K562 (cell line): ENCODE measurements at regions of chr21 and their contacts with region 1.

Region 1: DNA sequence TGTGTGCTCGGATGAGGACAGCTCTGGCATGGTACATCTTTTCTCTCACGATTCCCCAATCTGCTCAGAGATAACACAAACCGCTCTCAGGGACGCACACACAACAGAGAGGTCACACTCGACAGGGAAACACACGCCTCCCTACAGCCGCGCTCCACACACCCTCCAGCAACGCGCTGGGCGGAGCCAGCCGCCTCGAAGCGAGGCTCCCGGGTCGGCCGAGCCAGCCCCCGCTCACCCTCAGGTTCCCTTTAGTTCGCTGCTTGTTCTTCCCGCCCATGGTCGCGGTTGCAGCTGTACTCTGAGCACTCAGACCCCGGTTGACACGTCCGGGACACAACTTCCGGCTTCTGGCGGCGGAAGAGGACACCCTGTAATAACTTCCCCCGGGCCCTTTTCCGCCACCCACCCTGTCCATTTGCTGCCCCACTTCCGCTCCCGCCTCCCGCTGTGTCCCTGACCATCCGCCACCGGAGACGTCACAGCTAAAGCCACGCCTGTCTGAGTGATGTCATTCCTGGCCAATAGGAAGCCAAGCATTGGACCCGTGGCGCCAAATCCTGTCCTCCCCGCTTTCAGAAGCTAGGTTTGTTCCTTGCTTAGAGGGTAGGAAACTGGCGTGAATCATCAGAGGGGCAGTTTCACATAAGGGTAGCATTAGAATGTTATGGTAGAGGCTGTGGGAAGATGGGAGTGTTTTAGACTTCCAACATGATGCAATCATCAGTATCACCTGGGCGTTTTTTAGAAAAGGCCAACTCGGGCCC is at the start of gene LTN1:
- DNase-seq: peak; percentile 98 to 100 (median 98)
- ATAC-seq: peak; percentile 93
- H3K4me3 ChIP-seq: peak within 1 kb of the TSS; percentile 91
- H3K27ac ChIP-seq: peak within 1 kb of the TSS; percentile 93
- H3K4me1 ChIP-seq: peaks cover 4 to 8% of the 10 kb centered on the region in 2 experiments; a peak in 4 of 5 replicates
- H3K27me3 ChIP-seq: no peaks in the 10 kb centered on the region; a peak in 1 of 5 replicates
- CTCF ChIP-seq: no peak
- EP300 ChIP-seq: peak; percentile 47; the same call in 1 of the 2 replicates
- POLR2A ChIP-seq: peak; percentile 96
- RAD21 ChIP-seq: no peak; a peak in 1 of 4 replicates
- polyA plus RNA-seq, gene LTN1: 16.6 to 21.8 TPM

Region 2: DNA sequence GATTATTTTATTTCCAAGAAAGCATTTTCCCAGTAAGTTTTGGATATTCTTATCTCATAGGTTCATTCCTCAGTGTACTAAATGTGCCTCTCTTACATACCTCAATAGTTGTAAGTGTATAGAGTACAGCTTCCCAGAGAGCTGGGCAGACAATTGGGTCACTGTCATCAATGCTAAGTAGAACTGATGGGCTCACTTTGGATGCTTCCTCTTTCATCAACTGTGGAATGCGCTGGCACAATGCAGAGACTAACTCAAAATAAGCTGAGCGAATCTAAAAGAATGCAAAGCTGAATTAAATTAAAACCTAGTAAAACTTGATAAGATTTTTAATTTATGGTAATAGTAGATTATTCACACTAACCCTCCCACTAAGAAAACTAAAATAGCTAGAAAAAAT is 21.5 kb before region 1 on chr21:
- CTCF ChIA-PET with region 1: interaction called, 3 read pairs
- POLR2A ChIA-PET with region 1: interaction called, 12 read pairs
- in situ Hi-C with region 1: no loop called
- intact Hi-C with region 1: no loop called
- DNase-seq: no peak
- ATAC-seq: no peak
- H3K4me3 ChIP-seq: no peak overlapping the region
- H3K27ac ChIP-seq: no peak overlapping the region
- H3K4me1 ChIP-seq: no peaks in the 10 kb centered on the region
- H3K27me3 ChIP-seq: no peaks in the 10 kb centered on the region
- CTCF ChIP-seq: no peak
- EP300 ChIP-seq: no peak
- POLR2A ChIP-seq: no peak
- RAD21 ChIP-seq: no peak

Region 3: GRCh38 chr21:29195981-29196669 is 203.4 kb after region 1 on chr21:
- CTCF ChIA-PET with region 1: no interaction called
- POLR2A ChIA-PET with region 1: no interaction called
- in situ Hi-C with region 1: no loop called
- intact Hi-C with region 1: no loop called
- DNase-seq: peak; percentile 64 to 77 (median 74)
- ATAC-seq: peak; percentile 99
- H3K4me3 ChIP-seq: no peak overlapping the region
- H3K27ac ChIP-seq: no peak overlapping the region
- H3K4me1 ChIP-seq: peaks cover 0 to 4% of the 10 kb centered on the region in 2 experiments; a peak in 1 of 5 replicates
- H3K27me3 ChIP-seq: peaks cover 3 to 4% of the 10 kb centered on the region in 2 experiments; a peak in 2 of 5 replicates
- CTCF ChIP-seq: peak; percentile 41 to 66 (median 62); a peak in 5 of 6 replicates
- EP300 ChIP-seq: peak; percentile 65
- POLR2A ChIP-seq: no peak
- RAD21 ChIP-seq: peak; percentile 19 to 50; a peak in 2 of 4 replicates